ENCODE measurements at regions of chr6 and their contacts with region 1.

Region 1: GRCh38 chr6:129575378-129576118 is 134.4 kb downstream of the ARHGAP18 start:
- DNase-seq: peak in 2 of 9 experiments; percentile 36 to 55
- ATAC-seq: peak; percentile 42
- H3K4me3 ChIP-seq: peak overlapping the region; percentile 12 to 26
- H3K4me3 Mint-ChIP-seq: peak overlapping the region; percentile 52
- H3K27ac ChIP-seq: no peak overlapping the region
- H3K27ac Mint-ChIP-seq: no peak overlapping the region
- H3K4me1 ChIP-seq: no peaks in the 10 kb centered on the region
- H3K4me1 Mint-ChIP-seq: peaks cover 5% of the 10 kb centered on the region
- H3K27me3 ChIP-seq: no peaks in the 10 kb centered on the region
- H3K27me3 Mint-ChIP-seq: no peaks in the 10 kb centered on the region
- CTCF ChIP-seq: peak; percentile 62

Region 2: DNA sequence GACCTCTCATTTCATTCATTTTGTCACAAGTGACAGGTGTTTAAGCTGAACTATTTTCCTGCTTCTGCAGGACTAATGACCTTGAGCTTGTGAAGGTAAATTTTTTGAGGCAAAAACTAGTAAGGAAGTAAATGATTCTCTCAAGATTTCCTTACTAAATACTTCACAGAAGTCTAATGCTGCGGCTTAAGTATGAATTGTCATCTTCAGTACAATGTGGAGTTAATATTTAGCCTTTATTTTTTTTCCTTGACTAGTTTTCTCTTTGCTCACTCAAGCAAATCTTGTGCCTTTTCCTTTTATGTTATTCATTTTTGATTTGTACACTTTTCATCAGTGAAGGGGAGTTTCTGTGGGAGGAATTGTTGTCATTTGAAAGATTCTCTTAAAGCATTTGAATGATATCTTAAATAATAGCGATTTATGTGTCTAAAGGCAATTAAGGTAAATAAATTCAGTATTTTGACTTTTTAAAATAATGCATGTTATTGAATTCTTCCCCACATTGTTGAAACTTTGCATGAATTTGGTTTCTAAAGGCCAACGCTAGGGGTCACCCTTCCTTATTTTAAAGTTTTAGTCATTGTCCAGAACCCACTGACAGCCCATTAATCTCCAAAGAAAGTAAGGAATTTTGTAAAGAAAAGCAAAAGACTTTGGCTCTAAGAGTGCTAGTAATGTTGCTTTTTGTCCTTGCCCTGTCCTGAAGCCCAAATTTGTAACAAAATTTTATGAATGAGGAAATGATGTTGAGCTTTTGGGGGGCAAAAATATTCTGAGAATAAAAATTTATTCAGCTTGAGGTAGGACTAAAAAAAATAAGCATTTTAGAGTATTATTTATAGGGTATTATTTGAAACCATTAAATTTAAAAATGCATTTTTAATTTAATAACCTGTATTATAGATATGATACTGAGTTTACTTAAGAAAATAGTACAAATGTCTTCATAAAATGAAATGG is 850.0 kb before region 1 on chr6:
- CTCF ChIA-PET with region 1: no interaction called
- POLR2A ChIA-PET with region 1: no interaction called
- intact Hi-C with region 1: loop called in 1 of 2 experiments (anchors 10 kb)
- DNase-seq: peak in 3 of 9 experiments; percentile 12 to 37 (median 34)
- ATAC-seq: no peak
- H3K4me3 ChIP-seq: no peak overlapping the region
- H3K4me3 Mint-ChIP-seq: no peak overlapping the region
- H3K27ac ChIP-seq: no peak overlapping the region
- H3K27ac Mint-ChIP-seq: no peak overlapping the region
- H3K4me1 ChIP-seq: no peaks in the 10 kb centered on the region
- H3K4me1 Mint-ChIP-seq: no peaks in the 10 kb centered on the region
- H3K27me3 ChIP-seq: no peaks in the 10 kb centered on the region
- H3K27me3 Mint-ChIP-seq: peaks cover 18% of the 10 kb centered on the region
- CTCF ChIP-seq: peak; percentile 74

Region 3: DNA sequence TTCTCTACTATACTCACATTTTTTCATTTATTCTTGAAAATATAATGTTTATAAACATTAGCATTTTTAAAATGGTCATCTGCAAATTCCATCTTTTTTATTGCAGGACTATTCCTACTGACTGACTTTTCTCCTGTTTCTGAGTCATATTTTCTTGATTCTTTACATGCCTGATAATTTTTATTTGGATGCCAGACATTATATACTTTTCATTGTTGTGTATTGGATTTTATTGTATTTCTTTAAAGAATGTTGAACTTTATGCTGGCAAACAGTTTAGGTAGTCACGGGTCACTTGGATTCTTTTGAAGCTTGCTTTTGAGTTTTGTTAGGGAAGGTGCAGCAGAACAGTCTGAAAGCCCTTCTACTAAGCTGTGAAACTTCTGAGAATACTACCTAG is 268.7 kb before region 1 on chr6:
- CTCF ChIA-PET with region 1: no interaction called
- POLR2A ChIA-PET with region 1: no interaction called
- intact Hi-C with region 1: no loop called
- DNase-seq: no peak
- ATAC-seq: no peak
- H3K4me3 ChIP-seq: no peak overlapping the region
- H3K4me3 Mint-ChIP-seq: no peak overlapping the region
- H3K27ac ChIP-seq: no peak overlapping the region
- H3K27ac Mint-ChIP-seq: no peak overlapping the region
- H3K4me1 ChIP-seq: no peaks in the 10 kb centered on the region
- H3K4me1 Mint-ChIP-seq: no peaks in the 10 kb centered on the region
- H3K27me3 ChIP-seq: no peaks in the 10 kb centered on the region
- H3K27me3 Mint-ChIP-seq: peaks cover 14% of the 10 kb centered on the region
- CTCF ChIP-seq: no peak

Region 4: GRCh38 chr6:129565366-129565765 is 10.2 kb before region 1 on chr6:
- CTCF ChIA-PET with region 1: interaction called, 12 read pairs
- POLR2A ChIA-PET with region 1: no interaction called
- intact Hi-C with region 1: no loop called
- DNase-seq: no peak
- ATAC-seq: no peak
- H3K4me3 ChIP-seq: no peak overlapping the region
- H3K4me3 Mint-ChIP-seq: no peak overlapping the region
- H3K27ac ChIP-seq: no peak overlapping the region
- H3K27ac Mint-ChIP-seq: no peak overlapping the region
- H3K4me1 ChIP-seq: no peaks in the 10 kb centered on the region
- H3K4me1 Mint-ChIP-seq: no peaks in the 10 kb centered on the region
- H3K27me3 ChIP-seq: no peaks in the 10 kb centered on the region
- H3K27me3 Mint-ChIP-seq: no peaks in the 10 kb centered on the region
- CTCF ChIP-seq: no peak